ENCODE measurements at regions of chr2 and their contacts with region 1.

Region 1: GRCh38 chr2:39954346-39954745 is 175.3 kb upstream of the THUMPD2 start:
- DNase-seq: peak; percentile 9
- H3K4me3 ChIP-seq: no peak overlapping the region
- CTCF ChIP-seq: no peak

Region 2: GRCh38 chr2:40049781-40050180 is 95.4 kb after region 1 on chr2:
- in situ Hi-C with region 1: loop called (anchors 5 kb)
- DNase-seq: no peak
- H3K4me3 ChIP-seq: no peak overlapping the region
- CTCF ChIP-seq: no peak